HCT116 (cell line): ENCODE measurements at regions of chr13 and their contacts with region 1.

Region 1: DNA sequence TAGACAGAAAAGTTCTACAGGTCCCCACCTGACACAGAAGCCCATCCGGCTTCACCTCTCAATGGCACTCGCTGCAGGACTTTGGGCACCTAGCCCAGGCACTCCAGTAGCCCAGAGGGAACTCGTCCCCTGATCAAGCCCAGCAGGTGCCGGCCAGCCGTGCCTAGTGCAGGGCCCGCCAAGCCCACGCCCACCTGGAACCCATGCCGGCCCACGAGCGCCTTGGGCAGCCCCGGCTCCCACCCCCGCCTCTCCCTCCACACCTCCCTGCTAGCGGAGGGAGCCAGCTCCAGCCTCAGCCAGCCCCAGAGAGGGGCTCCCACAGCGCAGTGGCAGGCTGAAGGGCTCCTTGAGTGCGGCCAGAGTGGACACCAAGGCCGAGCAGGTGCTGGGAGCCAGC is 268.8 kb downstream of the SLITRK1 start:
- DNase-seq: no peak
- ATAC-seq: no peak
- H3K4me3 ChIP-seq: no peak overlapping the region
- H3K27ac ChIP-seq: no peak overlapping the region
- H3K4me1 ChIP-seq: peaks cover 0 to 3% of the 10 kb centered on the region in 2 experiments; a peak in 1 of 4 replicates
- H3K27me3 ChIP-seq: no peaks in the 10 kb centered on the region
- CTCF ChIP-seq: no peak
- POLR2A ChIP-seq: no peak
- RAD21 ChIP-seq: no peak

Region 2: DNA sequence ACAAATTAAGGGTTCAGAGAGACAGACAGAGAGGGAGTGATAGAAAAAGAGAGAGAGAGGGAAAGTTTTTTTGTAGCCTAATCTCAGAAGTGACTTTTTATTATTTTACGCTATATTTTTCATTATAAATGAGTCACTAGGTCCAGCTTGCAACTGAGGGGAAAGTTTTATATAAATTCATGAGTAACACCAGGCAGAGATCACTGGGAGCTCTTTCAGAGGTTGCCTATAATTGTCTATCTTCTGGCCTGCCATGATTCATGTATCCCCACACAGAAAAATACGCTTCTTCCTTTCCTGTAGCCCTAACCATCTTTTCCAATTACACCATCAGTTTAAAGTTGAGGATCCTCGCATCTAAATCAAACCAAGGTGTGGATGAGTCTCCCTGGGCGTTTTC is 199.1 kb before region 1 on chr13:
- CTCF ChIA-PET with region 1: no interaction called
- POLR2A ChIA-PET with region 1: no interaction called
- RAD21 ChIA-PET with region 1: no interaction called
- intact Hi-C with region 1: loop called (anchors 5 kb)
- DNase-seq: no peak
- ATAC-seq: no peak
- H3K4me3 ChIP-seq: no peak overlapping the region
- H3K27ac ChIP-seq: no peak overlapping the region
- H3K4me1 ChIP-seq: no peaks in the 10 kb centered on the region
- H3K27me3 ChIP-seq: no peaks in the 10 kb centered on the region
- CTCF ChIP-seq: no peak
- POLR2A ChIP-seq: no peak
- RAD21 ChIP-seq: no peak

Region 3: GRCh38 chr13:83498495-83499190 is 114.9 kb before region 1 on chr13:
- CTCF ChIA-PET with region 1: no interaction called
- POLR2A ChIA-PET with region 1: no interaction called
- RAD21 ChIA-PET with region 1: no interaction called
- intact Hi-C with region 1: no loop called
- DNase-seq: no peak
- ATAC-seq: no peak
- H3K4me3 ChIP-seq: no peak overlapping the region
- H3K27ac ChIP-seq: no peak overlapping the region
- H3K4me1 ChIP-seq: peaks cover 2 to 6% of the 10 kb centered on the region in 2 experiments; a peak in 1 of 4 replicates
- H3K27me3 ChIP-seq: no peaks in the 10 kb centered on the region
- CTCF ChIP-seq: no peak
- POLR2A ChIP-seq: no peak
- RAD21 ChIP-seq: no peak

Region 4: GRCh38 chr13:83515268-83516015 is 98.1 kb before region 1 on chr13:
- CTCF ChIA-PET with region 1: no interaction called
- POLR2A ChIA-PET with region 1: no interaction called
- RAD21 ChIA-PET with region 1: no interaction called
- intact Hi-C with region 1: no loop called
- DNase-seq: no peak
- ATAC-seq: no peak
- H3K4me3 ChIP-seq: no peak overlapping the region
- H3K27ac ChIP-seq: no peak overlapping the region
- H3K4me1 ChIP-seq: no peaks in the 10 kb centered on the region
- H3K27me3 ChIP-seq: no peaks in the 10 kb centered on the region
- CTCF ChIP-seq: no peak
- POLR2A ChIP-seq: no peak
- RAD21 ChIP-seq: no peak

Region 5: DNA sequence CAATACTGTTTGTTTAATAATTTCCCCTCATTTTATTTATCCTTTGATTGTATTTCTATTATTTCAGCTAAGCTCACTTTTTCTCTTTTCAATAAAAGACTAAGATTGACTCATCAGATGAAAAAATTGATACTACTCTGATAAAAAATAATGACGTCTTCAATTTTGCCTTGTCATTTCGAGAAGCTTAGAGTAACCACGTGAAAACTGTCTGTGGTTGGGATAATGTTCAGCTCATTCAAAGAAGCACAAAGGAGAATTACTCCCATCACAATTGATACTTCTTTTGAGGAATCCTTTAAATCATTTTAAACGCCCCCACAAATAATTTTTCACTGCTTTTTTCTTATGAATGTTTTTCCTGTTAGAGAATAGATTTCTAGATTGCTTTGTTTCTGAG is 587.4 kb after region 1 on chr13:
- CTCF ChIA-PET with region 1: no interaction called
- POLR2A ChIA-PET with region 1: no interaction called
- RAD21 ChIA-PET with region 1: no interaction called
- intact Hi-C with region 1: no loop called
- DNase-seq: no peak
- ATAC-seq: no peak
- H3K4me3 ChIP-seq: no peak overlapping the region
- H3K27ac ChIP-seq: no peak overlapping the region
- H3K4me1 ChIP-seq: no peaks in the 10 kb centered on the region
- H3K27me3 ChIP-seq: no peaks in the 10 kb centered on the region
- CTCF ChIP-seq: no peak
- POLR2A ChIP-seq: no peak
- RAD21 ChIP-seq: no peak